ENCODE measurements at regions of chr9 and their contacts with region 1.

Region 1: GRCh38 chr9:126500684-126501382 is 112.9 kb upstream of the LMX1B start:
- DNase-seq: peak; percentile 80 to 98 (median 88)

Region 2: GRCh38 chr9:126558051-126558665 is 57.3 kb after region 1 on chr9:
- intact Hi-C with region 1: loop called (anchors 1 kb)
- DNase-seq: peak in 9 of 10 donors; percentile 20 to 93 (median 67)

Region 3: GRCh38 chr9:126704873-126705766 is 204.3 kb after region 1 on chr9:
- intact Hi-C with region 1: loop called (anchors 10 kb)
- DNase-seq: peak; percentile 71 to 97 (median 83)

Region 4: GRCh38 chr9:126781186-126782052 is 280.6 kb after region 1 on chr9:
- intact Hi-C with region 1: loop called (anchors 5 kb)
- DNase-seq: peak; percentile 71 to 97 (median 90)